MCF 10A (cell line): ENCODE measurements at regions of chr13 and their contacts with region 1.

Region 1: DNA sequence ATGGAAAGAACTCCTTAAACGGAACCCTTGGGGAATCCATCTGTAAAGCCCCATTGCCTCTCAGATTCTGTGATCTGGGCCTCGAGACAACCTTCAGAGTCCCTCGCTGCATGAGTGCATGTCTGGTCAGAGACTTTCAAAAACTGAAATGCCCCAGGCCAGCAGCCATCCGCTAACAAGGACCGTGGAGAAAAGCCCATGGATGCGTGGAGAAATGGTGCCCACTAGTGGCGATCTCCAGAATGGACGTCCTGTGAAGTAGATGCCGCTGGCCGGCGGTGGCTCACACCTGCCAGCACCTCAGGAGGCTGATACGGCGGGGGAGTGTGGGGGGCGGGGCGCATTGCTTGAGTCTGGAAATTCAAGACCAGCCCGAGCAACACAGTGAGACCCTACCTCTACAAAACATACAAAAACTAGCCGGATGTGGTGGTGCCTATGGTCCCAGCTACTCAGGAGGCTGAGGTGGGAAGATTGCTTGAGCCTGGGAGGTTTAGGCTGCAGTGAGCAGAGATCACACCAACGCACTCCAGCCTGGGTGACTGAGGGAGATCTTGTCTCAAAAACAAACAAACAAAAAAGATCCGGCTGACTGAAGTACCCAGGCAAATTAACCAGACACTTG is 7.9 kb upstream of the CDC16 start:
- DNase-seq: peak; percentile 84
- H3K4me3 Mint-ChIP-seq: no peak overlapping the region
- H3K27ac Mint-ChIP-seq: no peak overlapping the region
- H3K4me1 Mint-ChIP-seq: peaks cover 6% of the 10 kb centered on the region
- H3K27me3 Mint-ChIP-seq: no peaks in the 10 kb centered on the region
- CTCF ChIP-seq: peak; percentile 96

Region 2: DNA sequence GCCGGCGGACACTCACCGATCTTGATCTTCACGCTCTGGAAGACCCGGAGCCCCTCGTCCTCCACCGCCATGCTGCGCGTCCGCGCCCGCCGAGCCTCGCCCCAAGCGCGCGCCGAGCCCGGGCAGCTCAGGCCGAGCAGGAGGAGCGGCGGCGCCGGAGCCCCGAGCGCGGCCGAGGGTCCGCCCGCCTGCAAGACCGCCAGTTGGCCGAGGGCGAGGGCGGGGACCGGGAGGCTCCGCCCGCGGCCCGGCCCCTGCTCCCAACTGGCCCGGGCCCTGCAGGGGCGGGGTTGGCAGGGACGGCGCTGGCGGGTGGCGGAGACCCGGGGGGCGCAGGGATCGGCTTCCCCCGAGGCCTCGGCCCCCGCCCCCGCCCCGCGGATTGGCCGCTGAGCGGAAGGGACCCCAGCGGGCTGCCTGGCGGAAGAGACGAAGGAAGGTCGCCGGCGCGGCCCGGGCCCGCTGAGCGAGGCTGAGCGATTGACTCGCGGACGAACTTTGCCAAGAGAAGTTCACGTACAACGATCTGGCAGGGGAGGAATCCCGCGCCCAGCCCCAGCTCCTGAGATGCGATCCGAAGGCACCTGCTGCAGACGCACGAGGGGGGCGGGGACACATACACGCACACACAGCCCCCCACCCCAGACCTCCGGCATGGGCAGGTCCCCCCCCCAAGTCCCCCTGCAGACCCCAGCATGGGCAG is 94.2 kb before region 1 on chr13 and contains the start of gene RASA3:
- CTCF ChIA-PET with region 1: no interaction called
- POLR2A ChIA-PET with region 1: no interaction called
- intact Hi-C with region 1: loop called (anchors 5 kb)
- DNase-seq: peak; percentile 71
- H3K4me3 Mint-ChIP-seq: peak within 1 kb of the TSS; percentile 89
- H3K27ac Mint-ChIP-seq: peak within 1 kb of the TSS; percentile 69
- H3K4me1 Mint-ChIP-seq: peaks cover 5% of the 10 kb centered on the region
- H3K27me3 Mint-ChIP-seq: no peaks in the 10 kb centered on the region
- CTCF ChIP-seq: no peak
- total RNA-seq, gene RASA3: 9.1 and 12.1 TPM in 2 replicates

Region 3: GRCh38 chr13:114151565-114152284 is 75.1 kb before region 1 on chr13:
- CTCF ChIA-PET with region 1: no interaction called
- POLR2A ChIA-PET with region 1: no interaction called
- intact Hi-C with region 1: loop called (anchors 5 kb)
- DNase-seq: peak; percentile 93
- H3K4me3 Mint-ChIP-seq: no peak overlapping the region
- H3K27ac Mint-ChIP-seq: peak overlapping the region; percentile 57
- H3K4me1 Mint-ChIP-seq: peaks cover 10% of the 10 kb centered on the region
- H3K27me3 Mint-ChIP-seq: peaks cover 4% of the 10 kb centered on the region
- CTCF ChIP-seq: peak; percentile 17